ENCODE measurements at regions of chr15 and their contacts with region 1.

Region 1: GRCh38 chr15:59384507-59384906 is 11.8 kb upstream of the MYO1E start:
- DNase-seq: no peak
- H3K4me3 ChIP-seq: no peak overlapping the region
- H3K27ac ChIP-seq: no peak overlapping the region
- H3K4me1 ChIP-seq: peaks cover 0 to 2% (median 0%) of the 10 kb centered on the region in 4 experiments; a peak in 1 of 7 replicates
- H3K27me3 ChIP-seq: no peaks in the 10 kb centered on the region
- CTCF ChIP-seq: no peak
- EP300 ChIP-seq: no peak
- POLR2A ChIP-seq: no peak
- RAD21 ChIP-seq: no peak

Region 2: DNA sequence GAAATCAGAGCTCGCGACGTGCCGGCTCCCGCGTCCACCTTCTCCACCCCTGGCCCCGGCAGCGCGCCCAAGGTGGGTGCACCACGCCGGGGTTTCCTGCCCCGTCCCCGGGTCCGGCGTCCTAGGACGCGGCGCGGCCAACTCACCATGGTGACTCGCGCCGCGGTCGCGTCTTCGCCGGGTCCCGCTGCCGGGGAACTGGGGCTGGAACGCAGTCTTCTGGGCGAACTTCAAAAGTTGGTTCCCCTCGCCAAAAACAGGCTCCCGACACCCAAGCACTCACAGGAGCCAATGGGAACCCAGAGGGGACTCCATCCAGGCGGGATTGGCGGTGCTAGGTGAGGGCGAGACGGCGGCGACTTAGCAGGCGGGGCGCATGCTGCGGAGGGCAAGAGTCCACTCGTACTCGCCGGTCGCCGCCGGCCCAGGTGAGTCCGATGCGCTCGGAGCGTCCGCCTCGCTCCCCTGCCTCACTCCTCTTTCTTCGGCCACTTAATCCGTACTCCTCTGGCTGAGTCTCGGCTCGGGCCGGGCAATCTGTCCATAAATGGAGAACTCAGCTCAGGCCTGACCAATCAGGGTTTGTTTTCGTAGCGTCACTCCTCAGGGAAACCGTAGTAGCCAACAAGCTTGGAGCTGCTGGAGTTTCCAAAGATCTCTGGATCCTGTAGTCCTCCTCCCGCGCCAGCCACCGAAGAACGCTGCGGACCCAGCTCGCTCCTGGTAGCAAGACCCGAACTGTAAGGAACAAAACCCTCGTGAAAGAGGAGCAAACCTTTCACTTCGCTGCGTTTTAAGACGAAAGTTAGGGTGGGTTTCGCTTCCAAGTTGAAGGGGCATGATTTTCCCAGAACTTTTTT is 11.9 kb before region 1 on chr15 and contains the start of gene MYO1E:
- CTCF ChIA-PET with region 1: no interaction called
- POLR2A ChIA-PET with region 1: interaction called, 10 read pairs
- DNase-seq: peak; percentile 92 to 93
- H3K4me3 ChIP-seq: peak within 1 kb of the TSS; percentile 79 to 86 (median 82)
- H3K27ac ChIP-seq: peak within 1 kb of the TSS; percentile 95
- H3K4me1 ChIP-seq: peaks cover 0 to 7% (median 1%) of the 10 kb centered on the region in 4 experiments; a peak in 3 of 7 replicates
- H3K27me3 ChIP-seq: no peaks in the 10 kb centered on the region
- CTCF ChIP-seq: no peak
- EP300 ChIP-seq: 0 out of 3 replicates have a peak, but pooled peaks of 1 of the 2 experiments have one; percentile 23
- POLR2A ChIP-seq: peak; percentile 98 to 99
- RAD21 ChIP-seq: no peak
- total RNA-seq, gene MYO1E: 138 and 142 TPM in 2 replicates

Region 3: GRCh38 chr15:59699810-59700431 is 315.4 kb after region 1 on chr15:
- CTCF ChIA-PET with region 1: no interaction called
- POLR2A ChIA-PET with region 1: no interaction called
- DNase-seq: no peak
- H3K4me3 ChIP-seq: no peak overlapping the region
- H3K27ac ChIP-seq: no peak overlapping the region
- H3K4me1 ChIP-seq: no peaks in the 10 kb centered on the region
- H3K27me3 ChIP-seq: peaks cover 0 to 1% (median 0%) of the 10 kb centered on the region in 4 experiments; a peak in 1 of 7 replicates
- CTCF ChIP-seq: no peak
- EP300 ChIP-seq: no peak
- POLR2A ChIP-seq: no peak
- RAD21 ChIP-seq: no peak

Measured in H1 (cell line).